Kidney (tissue), 22 donors: ENCODE measurements at regions of chr6 and their contacts with region 1.

Region 1: DNA sequence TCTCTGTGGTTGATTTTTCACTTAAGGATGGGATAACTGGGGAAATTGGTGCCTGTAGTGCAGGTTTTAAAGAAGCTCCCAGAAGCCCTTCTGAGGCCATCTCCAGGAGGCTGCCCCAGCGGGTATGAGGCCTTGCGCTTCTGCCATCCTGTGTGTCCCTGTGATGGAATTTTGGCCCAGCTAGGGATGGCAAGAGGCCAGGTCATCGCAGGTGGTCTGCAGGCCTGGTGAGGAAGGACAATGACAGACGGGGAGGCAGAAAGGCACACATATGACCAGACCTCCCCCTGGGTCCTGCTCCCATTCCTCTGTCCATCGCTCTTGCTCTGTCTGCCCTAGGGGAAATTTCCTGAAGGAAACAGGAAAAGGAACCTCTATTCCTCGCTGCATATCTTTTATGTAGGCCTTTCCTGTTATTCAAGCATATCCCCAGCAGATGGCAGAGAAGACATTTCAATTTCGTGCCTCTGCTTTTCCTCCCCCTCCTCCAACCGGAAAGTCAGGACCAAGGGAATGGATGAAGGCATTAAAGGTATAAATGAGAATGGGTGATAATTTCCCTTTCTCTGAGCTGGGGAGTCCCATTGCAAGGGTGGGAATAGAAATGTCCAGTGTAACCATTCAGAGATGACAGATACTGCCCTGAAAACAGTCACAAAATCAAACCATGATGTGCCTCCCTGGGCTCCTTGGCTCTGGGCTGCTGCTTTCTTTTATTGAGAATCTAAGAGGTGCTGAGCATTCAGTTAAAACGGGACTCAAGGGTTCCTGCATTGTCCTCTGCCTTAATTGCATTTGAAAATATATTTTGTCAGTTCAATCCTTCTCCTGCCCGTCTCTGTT is 17.6 kb upstream of the HLA-F start:
- DNase-seq: peak in 3 of 5 donors; percentile 22 to 66 (median 58)
- H3K4me3 ChIP-seq: no peak overlapping the region
- H3K27ac ChIP-seq: no peak overlapping the region
- H3K4me1 ChIP-seq: peaks cover 0 to 3% (median 0%) of the 10 kb centered on the region in 3 donors
- H3K27me3 ChIP-seq: peaks cover 2% of the 10 kb centered on the region
- CTCF ChIP-seq: peak; percentile 61

Region 2: GRCh38 chr6:29834564-29835436 is 129.2 kb after region 1 on chr6:
- intact Hi-C with region 1: loop called (anchors 10 kb)
- DNase-seq: peak in 3 of 5 donors; percentile 21 to 55 (median 45)
- H3K4me3 ChIP-seq: no peak overlapping the region
- H3K27ac ChIP-seq: no peak overlapping the region
- H3K4me1 ChIP-seq: no peaks in the 10 kb centered on the region
- H3K27me3 ChIP-seq: no peaks in the 10 kb centered on the region
- CTCF ChIP-seq: peak; percentile 67